ENCODE measurements at regions of chr3 and their contacts with region 1.

Region 1: DNA sequence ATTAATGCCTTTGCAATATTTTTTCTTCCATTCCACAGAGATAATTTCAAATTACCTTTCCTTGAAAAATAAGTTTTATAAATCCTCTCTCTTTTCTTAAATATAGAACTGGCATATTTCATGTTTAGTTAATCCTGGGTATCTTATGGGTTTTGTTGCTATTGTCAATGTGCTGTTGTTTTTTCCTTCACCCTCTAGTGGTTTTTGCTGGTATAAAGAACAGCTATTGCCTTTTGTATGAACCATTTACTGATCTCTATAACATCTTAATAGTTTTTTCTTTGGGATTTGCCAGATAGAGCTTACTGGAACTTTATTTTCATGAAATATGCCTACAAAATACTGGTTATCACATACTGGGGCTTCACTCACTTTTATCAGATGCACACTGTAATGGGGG is 359.6 kb upstream of the DPPA4 start:
- DNase-seq: peak; percentile 13
- ATAC-seq: no peak; the same call in 1 of the 2 replicates
- H3K4me3 ChIP-seq: no peak overlapping the region
- H3K27ac ChIP-seq: no peak overlapping the region
- H3K4me1 ChIP-seq: no peaks in the 10 kb centered on the region
- H3K27me3 ChIP-seq: no peaks in the 10 kb centered on the region
- CTCF ChIP-seq: peak; percentile 49

Region 2: DNA sequence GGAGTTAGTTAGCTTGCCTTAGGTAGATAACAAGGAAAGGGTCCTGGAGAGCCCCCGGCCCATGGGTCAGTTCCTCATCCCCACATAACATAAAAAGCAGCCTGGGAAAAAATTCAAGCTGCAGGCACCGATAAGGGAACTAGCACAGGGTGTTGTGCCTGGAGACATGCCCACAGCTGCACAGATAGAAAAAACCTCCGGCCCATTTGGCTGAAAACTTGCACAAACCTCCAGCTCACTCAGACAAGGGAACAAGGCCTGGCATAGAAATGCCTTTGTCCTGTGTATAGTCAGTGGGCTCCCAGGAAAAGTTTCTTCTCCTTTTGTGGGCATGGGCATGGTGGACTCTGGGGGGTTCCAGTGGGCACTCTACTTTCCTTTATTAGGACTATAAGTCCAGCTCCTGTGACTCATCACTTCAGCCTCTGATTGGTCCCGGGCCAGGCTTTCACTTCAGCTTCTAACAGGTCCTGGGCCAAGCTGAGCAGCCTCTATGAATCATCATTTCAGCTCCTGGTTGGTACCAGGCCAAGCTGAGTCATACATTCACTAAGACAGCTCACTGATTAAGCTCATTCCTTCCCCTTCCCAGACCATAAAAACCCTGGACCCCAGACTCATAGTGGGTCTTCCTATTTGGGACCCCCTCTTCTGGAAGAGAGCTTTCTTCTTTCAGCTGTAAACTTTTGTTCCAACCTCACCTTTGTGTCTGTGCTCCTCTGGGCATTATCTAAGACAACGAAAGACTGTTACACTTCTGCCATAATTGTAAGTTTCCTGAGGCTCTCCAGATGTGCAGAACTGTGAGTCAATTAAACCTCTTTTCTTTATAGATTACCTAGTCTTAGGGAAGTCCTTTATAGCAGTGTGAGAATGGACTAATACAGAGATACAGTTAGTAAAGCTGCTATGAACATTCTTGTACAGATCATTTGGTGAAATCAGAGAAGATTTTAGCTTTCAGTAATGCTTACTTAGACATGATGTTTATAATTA is 11.6 kb before region 1 on chr3:
- CTCF ChIA-PET with region 1: no interaction called
- POLR2A ChIA-PET with region 1: no interaction called
- intact Hi-C with region 1: loop called (anchors 1 kb)
- DNase-seq: peak; percentile 99
- ATAC-seq: peak; percentile 97
- H3K4me3 ChIP-seq: no peak overlapping the region
- H3K27ac ChIP-seq: peak overlapping the region; percentile 63
- H3K4me1 ChIP-seq: peaks cover 18% of the 10 kb centered on the region
- H3K27me3 ChIP-seq: no peaks in the 10 kb centered on the region
- CTCF ChIP-seq: no peak

Region 3: DNA sequence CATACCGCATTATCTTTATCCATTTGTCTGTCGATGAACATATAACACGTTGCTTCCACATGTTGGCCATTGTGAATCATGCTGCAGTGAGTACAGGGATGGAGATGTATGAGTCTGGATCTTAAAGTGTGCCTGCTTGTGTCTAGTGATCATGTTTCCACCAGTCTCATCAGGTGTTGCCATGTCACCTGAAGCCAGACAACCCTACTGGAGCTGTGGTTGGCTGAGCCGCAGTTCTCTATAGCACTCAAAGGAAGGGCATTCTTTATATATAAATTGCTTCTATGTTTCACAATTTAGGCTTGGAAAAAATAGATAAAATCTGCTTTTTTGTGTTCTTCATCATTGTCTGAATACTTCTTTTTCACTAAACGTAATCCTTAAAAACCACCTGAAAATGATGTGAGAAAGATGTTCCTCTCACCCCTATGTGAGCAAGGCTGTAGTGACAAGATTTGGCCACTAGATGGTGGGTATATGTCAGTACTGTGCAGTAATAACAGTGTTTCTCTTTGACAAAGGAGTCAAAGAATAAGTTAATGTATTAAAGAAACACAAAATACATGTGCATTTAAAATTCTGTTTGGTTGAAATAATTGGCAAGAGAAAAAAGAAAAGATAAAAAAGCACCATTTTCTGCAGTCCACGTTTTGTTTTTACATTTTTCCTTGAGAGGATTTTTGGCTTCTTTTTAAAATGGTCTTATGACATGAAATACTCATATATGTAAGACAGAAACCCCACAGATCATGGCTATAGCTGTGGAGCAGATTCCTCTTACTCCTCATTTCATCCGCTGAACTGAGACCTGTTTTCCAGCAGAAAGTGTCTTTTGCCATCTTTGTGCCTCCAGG is 34.9 kb after region 1 on chr3:
- CTCF ChIA-PET with region 1: no interaction called
- POLR2A ChIA-PET with region 1: no interaction called
- intact Hi-C with region 1: no loop called
- DNase-seq: peak; percentile 84
- ATAC-seq: peak; percentile 85
- H3K4me3 ChIP-seq: no peak overlapping the region
- H3K27ac ChIP-seq: no peak overlapping the region
- H3K4me1 ChIP-seq: no peaks in the 10 kb centered on the region
- H3K27me3 ChIP-seq: no peaks in the 10 kb centered on the region
- CTCF ChIP-seq: peak; percentile 93